ENCODE measurements at regions of chr16 and their contacts with region 1.

Region 1: DNA sequence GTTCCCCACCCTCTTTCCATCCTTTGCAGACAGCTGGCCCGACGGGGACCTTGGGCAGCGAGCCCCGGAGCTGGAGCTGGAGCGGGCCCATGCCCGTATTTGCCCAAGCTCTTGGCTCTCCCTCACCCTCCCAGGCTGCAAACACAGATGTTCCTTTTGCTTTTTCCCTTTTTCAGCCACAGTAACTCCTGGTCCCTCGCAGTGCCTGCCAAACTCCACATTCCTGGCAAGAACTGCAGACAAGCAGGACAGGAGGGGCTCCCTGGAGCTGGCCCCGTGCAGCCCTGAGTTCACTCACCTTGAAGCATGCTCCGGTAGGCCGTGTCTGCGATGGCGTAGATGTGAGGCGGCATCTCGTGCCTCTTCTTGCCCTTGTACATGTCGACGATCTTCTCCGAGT is 33.9 kb downstream of the MYH11 start:
- DNase-seq: no peak
- CTCF ChIP-seq: no peak

Region 2: GRCh38 chr16:15643048-15643945 is 179.7 kb before region 1 on chr16 and contains the start of gene MARF1:
- CTCF ChIA-PET with region 1: no interaction called
- POLR2A ChIA-PET with region 1: no interaction called
- DNase-seq: peak; percentile 90
- CTCF ChIP-seq: no peak

Region 3: DNA sequence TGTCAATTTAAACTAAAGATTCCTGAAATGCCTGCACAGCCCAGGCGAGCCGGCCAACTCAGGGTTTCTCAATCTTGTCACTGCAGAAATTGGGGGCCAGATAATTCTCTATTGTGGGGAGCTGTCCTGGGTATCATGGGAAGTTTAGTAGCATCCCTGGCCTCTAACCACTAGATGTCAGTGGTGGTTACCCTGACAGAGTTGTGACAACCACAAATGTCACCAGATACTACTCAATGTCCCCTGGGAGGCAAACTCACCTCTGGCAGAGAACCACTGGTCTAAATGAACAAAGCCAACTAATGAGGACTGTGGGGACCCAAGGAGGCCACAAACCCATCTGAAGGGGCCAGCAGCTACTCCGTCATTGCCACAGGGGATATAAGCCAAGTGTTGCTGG is 57.1 kb before region 1 on chr16:
- CTCF ChIA-PET with region 1: interaction called, 17 read pairs
- POLR2A ChIA-PET with region 1: no interaction called
- DNase-seq: peak; percentile 80
- CTCF ChIP-seq: peak; percentile 71

Region 4: DNA sequence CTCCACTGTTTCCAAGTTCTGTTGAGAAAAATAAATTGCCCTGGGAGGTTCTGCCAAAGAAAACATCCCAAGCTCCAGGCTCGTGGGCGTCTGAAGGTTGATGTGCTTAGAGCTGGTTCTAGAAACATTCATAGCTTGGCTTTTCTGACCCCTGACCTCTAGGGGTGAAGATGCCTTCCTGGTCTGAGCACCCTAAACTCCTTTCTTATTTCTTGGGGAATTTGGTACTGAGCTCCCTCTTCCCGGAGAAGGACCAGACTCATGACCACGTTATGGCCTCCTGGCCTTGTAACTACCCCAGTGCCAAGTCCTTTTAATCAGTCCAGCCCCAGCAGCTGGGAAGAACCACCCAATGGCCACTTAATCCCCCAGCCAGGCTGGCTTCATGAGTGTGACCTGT is 32.5 kb before region 1 on chr16:
- CTCF ChIA-PET with region 1: interaction called, 13 read pairs
- POLR2A ChIA-PET with region 1: no interaction called
- DNase-seq: no peak
- CTCF ChIP-seq: no peak

Region 5: DNA sequence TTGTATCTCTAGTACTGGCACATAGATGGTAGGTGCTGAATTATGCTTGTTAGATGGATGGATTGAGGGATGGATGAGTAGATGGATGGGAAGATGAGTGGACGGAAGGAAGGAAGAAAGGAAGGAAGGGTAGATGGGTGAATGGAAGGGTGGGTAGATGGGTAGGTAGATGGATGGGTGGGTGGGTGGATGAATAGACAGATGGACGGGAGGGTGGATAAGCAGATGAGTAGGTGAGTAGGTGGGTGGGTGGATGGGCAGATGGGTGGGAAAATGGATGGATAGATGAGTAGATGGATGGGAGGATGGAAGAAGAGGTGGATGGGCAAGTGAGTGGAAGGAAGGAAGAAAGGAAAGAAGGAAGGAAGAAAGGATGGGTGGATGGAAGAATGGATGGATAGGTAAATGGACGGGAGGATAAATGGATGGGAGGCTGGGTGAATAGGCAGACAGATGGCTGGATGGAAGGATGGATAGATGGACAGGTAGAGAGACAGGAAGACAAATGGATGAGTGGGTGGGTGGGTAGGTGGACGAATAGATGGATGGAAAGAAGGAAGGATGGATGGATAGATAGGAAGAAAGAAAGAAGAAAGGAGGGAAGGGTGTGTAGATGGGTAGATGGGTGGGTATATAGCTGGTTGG is 23.0 kb before region 1 on chr16:
- CTCF ChIA-PET with region 1: interaction called, 17 read pairs
- POLR2A ChIA-PET with region 1: interaction called, 4 read pairs
- DNase-seq: no peak
- CTCF ChIP-seq: no peak

Region 6: GRCh38 chr16:15811481-15812400 is 11.2 kb before region 1 on chr16:
- CTCF ChIA-PET with region 1: interaction called, 28 read pairs
- POLR2A ChIA-PET with region 1: no interaction called
- DNase-seq: no peak
- CTCF ChIP-seq: no peak

Region 7: DNA sequence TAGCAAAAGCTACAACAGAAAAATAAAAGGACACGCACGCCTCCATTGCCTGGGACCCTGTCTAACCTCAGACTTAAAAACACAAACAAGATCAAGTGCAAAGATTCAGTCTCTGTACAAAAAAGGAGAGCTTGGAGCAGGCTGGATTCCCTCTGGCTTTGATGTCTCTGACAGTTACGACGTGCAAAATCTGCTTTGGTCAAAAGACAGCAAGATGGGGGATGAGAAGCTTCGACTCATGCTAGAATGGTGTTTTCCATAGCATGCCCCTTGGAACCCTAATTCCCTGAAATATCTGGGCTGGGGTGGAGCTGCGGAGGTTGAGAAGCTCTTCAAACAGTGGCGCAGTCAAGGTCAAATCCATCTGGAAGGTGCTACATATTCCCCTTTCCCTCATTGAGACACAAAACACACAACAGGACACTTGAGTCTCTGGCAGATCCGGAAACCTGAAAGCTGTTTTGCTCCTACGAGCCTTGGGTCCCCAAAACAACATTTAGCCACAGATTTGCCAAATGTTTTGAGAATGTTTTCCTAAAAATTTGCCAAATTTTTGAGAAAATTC is 24.7 kb after region 1 on chr16:
- CTCF ChIA-PET with region 1: interaction called, 11 read pairs
- POLR2A ChIA-PET with region 1: no interaction called
- DNase-seq: no peak
- CTCF ChIP-seq: no peak

Measured in GM10248 (cell line).